ENCODE measurements at regions of chr9 and their contacts with region 1.

Region 1: GRCh38 chr9:36382484-36382883 is 17.6 kb downstream of the RNF38 start:
- DNase-seq: no peak
- ATAC-seq: no peak
- H3K4me3 ChIP-seq: no peak overlapping the region
- H3K4me3 Mint-ChIP-seq: peak overlapping the region; percentile 41
- H3K27ac ChIP-seq: peak overlapping the region in 1 of 2 experiments; percentile 51
- H3K27ac Mint-ChIP-seq: peak overlapping the region; percentile 42
- H3K4me1 ChIP-seq: peaks cover 24% of the 10 kb centered on the region
- H3K4me1 Mint-ChIP-seq: peaks cover 73% of the 10 kb centered on the region
- H3K27me3 ChIP-seq: no peaks in the 10 kb centered on the region
- H3K27me3 Mint-ChIP-seq: no peaks in the 10 kb centered on the region
- CTCF ChIP-seq: no peak

Region 2: DNA sequence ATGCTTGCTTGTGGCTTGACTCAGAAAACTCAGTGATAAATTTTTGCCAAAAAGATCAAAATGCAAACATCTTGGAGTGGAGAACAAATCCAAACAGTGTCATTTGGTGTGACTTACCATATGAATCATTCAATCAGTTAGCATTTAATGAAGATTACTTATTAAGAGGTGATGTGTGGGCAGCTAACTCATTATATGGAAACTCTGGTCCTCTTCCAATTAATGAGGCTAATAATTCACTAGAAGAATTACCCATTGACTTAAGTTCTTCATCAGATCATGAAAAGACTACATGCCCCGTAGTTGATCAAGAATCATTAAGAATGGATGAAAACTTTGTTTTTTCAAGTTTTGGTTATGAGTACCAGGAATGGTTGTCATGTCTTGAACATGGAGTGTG is 1078.9 kb before region 1 on chr9:
- CTCF ChIA-PET with region 1: no interaction called
- POLR2A ChIA-PET with region 1: no interaction called
- intact Hi-C with region 1: loop called in 1 of 2 experiments (anchors 5 kb)
- DNase-seq: no peak
- ATAC-seq: no peak
- H3K4me3 ChIP-seq: no peak overlapping the region
- H3K4me3 Mint-ChIP-seq: no peak overlapping the region
- H3K27ac ChIP-seq: no peak overlapping the region
- H3K27ac Mint-ChIP-seq: no peak overlapping the region
- H3K4me1 ChIP-seq: no peaks in the 10 kb centered on the region
- H3K4me1 Mint-ChIP-seq: no peaks in the 10 kb centered on the region
- H3K27me3 ChIP-seq: peaks cover 0 to 2% of the 10 kb centered on the region in 2 experiments
- H3K27me3 Mint-ChIP-seq: peaks cover 44% of the 10 kb centered on the region
- CTCF ChIP-seq: no peak